Activated CD4-positive, alpha-beta T cell treated with anti-CD3 and anti-CD28 coated beads for 36 hours (primary cell): ENCODE measurements at regions of chr12 and their contacts with region 1.

Region 1: GRCh38 chr12:120892265-120892664 is 11.9 kb downstream of the SPPL3 start:
- DNase-seq: no peak
- ATAC-seq: peak; percentile 74
- H3K4me3 Mint-ChIP-seq: no peak overlapping the region
- H3K27ac Mint-ChIP-seq: peak overlapping the region; percentile 26
- H3K4me1 Mint-ChIP-seq: peaks cover 54% of the 10 kb centered on the region
- H3K27me3 Mint-ChIP-seq: no peaks in the 10 kb centered on the region

Region 2: DNA sequence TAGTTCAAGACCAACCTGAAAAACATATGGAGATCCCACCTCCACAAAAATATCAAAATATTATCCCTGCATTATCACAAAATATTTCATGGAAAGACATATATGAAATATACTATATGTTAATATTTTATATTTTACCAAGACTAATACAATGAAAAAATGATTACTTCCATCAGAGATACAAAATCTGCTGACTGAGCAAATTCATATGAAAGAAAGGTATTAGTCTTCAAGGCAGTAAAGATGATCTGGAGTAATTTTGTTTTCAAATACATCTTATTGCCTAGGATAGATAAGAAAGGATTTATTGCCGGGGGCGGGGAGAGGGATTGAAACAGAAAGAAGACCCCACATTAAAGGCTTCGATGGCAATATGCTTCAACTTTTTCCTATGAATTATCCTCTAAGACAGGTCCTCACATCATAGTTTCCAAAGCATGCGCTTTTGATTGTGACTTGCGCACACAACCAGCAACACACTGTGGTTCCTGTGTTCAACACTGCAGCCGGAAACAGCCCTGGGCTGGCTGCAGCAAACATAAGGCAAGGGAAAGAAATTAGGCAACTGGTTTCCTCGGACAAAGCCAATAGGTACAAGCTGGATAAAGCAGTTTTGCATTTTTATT is 71.3 kb before region 1 on chr12:
- CTCF ChIA-PET with region 1: no interaction called
- POLR2A ChIA-PET with region 1: no interaction called
- intact Hi-C with region 1: no loop called
- DNase-seq: peak; percentile 75
- ATAC-seq: peak; percentile 86
- H3K4me3 Mint-ChIP-seq: peak overlapping the region; percentile 43
- H3K27ac Mint-ChIP-seq: peak overlapping the region; percentile 81
- H3K4me1 Mint-ChIP-seq: peaks cover 44% of the 10 kb centered on the region
- H3K27me3 Mint-ChIP-seq: no peaks in the 10 kb centered on the region

Region 3: DNA sequence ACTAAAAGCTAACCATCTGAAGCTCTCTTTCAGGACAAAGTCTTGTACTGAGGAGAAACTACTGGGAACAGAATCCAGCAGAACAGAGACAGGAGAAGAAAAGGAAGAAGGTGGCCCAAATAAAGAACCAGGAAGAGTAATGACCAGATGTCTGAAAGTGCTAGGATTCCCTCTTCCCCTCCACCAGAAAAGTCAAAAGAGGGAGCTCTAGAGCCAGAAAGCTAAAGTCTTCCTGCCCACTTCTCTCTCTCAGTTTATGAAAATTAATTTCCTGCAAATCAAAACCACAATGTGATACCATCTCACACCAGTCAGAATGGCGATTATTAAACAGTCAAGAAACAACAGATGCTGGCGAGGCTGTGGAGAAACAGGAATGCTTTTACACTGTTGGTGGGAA is 35.3 kb before region 1 on chr12:
- CTCF ChIA-PET with region 1: interaction called, 4 read pairs
- POLR2A ChIA-PET with region 1: no interaction called
- intact Hi-C with region 1: loop called in 1 of 2 experiments (anchors 5 kb)
- DNase-seq: no peak
- ATAC-seq: peak; percentile 59
- H3K4me3 Mint-ChIP-seq: no peak overlapping the region
- H3K27ac Mint-ChIP-seq: peak overlapping the region; percentile 35
- H3K4me1 Mint-ChIP-seq: peaks cover 40% of the 10 kb centered on the region
- H3K27me3 Mint-ChIP-seq: no peaks in the 10 kb centered on the region